ENCODE measurements at regions of chr11 and their contacts with region 1.

Region 1: GRCh38 chr11:66694732-66695207 is 17.1 kb upstream of the RBM4B start:
- DNase-seq: peak; percentile 70 to 86
- ATAC-seq: peak; percentile 89 to 93
- H3K4me3 ChIP-seq: no peak overlapping the region
- H3K27ac ChIP-seq: no peak overlapping the region
- H3K4me1 ChIP-seq: peaks cover 0 to 7% of the 10 kb centered on the region in 2 donors
- H3K27me3 ChIP-seq: no peaks in the 10 kb centered on the region
- CTCF ChIP-seq: peak; percentile 86 to 96 (median 90)
- POLR2A ChIP-seq: no peak

Region 2: DNA sequence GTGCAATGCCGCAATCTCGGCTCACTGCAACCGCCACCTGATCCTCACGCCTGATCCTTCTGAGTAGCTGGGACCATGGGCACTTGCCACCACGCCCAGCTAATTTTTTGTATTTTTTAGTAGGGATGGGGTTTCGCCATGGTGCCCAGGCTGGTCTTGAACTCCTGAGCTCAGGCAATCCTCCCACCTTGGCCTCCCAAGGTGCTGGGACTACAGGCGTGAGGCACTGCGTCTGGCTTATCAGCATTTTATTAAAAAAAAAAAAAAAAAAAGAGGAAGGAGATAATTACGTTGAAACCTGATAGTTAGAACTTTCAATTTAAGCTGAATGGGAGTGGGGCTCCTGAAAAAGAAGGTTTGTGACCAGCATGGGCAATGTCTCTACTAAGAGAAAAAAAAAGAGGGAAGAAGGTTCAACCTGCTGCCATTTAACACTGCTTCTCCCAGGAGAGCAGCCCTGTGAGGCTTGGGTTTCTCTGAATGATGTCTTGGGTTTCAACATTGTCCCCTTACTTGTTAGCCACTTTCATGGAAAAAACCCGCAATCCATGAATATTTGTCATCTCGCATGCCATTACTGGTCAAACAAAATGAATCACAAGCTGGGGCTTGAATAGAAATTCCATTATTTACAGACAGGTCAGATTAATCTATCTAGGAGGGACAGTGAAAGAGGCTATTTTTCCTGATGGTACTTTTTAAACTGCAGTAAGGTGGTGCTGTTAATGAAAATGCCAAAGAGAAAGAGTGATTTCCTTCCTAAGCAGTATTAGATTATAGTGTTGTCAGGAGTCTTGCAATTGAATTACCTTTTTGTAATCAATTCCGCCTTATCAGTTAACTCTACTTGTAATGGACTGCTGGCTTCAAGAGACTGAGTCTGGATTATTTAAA is 552.2 kb before region 1 on chr11:
- in situ Hi-C with region 1: no loop called
- intact Hi-C with region 1: no loop called
- DNase-seq: no peak
- ATAC-seq: no peak
- H3K4me3 ChIP-seq: no peak overlapping the region
- H3K27ac ChIP-seq: no peak overlapping the region
- H3K4me1 ChIP-seq: no peaks in the 10 kb centered on the region
- H3K27me3 ChIP-seq: no peaks in the 10 kb centered on the region
- CTCF ChIP-seq: no peak
- POLR2A ChIP-seq: no peak

Region 3: GRCh38 chr11:66835768-66836405 is 141.1 kb after region 1 on chr11:
- in situ Hi-C with region 1: loop called (anchors 5 to 10 kb)
- intact Hi-C with region 1: loop called (anchors 1 kb)
- DNase-seq: no peak
- ATAC-seq: no peak
- H3K4me3 ChIP-seq: no peak overlapping the region
- H3K27ac ChIP-seq: no peak overlapping the region
- H3K4me1 ChIP-seq: no peaks in the 10 kb centered on the region
- H3K27me3 ChIP-seq: no peaks in the 10 kb centered on the region
- CTCF ChIP-seq: no peak
- POLR2A ChIP-seq: no peak

Region 4: DNA sequence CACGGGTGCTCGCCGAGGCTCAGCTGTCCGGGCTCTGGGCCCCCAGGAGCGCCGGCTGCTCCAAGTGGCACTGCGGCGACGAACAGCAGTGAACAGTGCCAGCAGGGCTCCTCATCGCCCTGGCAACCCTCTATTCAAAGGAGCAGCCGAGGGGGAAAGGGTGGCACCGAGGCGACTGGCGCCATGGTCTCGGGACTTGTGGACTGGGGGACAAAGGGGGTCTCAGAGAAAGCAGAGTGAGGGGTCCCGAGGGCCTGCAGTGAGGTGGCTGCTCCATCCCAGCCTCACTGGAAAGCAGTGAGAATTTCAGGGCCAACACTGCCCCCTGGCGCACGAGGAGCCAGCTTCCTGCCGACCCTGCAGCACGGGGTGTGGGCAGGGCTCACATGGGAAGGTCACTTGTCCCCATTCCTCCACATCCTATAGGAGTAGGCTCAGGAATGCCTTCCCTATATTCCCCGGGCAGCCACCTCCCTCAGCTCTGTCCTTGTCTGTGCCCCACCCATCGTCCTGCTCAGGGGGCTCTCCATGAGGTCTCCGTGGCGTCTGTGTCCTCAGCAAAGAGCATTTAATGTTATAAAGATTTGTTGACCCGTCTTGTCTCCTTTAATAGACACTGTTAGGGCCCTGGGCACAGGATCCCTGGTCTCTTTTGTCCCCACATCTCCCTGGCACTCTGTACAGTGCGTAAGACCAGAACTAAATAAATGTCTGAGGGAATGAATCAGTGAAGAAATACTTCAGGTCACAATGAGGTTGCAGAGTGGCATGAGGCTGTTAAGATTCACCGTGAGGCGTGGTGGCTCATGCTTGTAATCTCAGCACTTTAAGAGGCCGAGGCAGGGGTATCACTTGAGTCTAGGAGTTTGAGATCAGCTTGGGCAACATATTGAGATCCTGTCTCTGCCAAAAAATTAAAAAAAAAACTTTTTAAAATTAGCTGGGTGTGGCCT is 188.5 kb after region 1 on chr11:
- in situ Hi-C with region 1: no loop called
- intact Hi-C with region 1: loop called (anchors 1 kb)
- DNase-seq: peak; percentile 36 to 73
- ATAC-seq: peak; percentile 68 to 79
- H3K4me3 ChIP-seq: peak overlapping the region; percentile 21 to 45 (median 42)
- H3K27ac ChIP-seq: peak overlapping the region in 3 of 4 donors; percentile 64 to 81 (median 71)
- H3K4me1 ChIP-seq: peaks cover 9 to 51% of the 10 kb centered on the region in 2 donors
- H3K27me3 ChIP-seq: no peaks in the 10 kb centered on the region
- CTCF ChIP-seq: peak; percentile 66 to 82 (median 76)
- POLR2A ChIP-seq: no peak

Measured in gastrocnemius medialis (tissue), 4 donors.